T-cell (primary cell): ENCODE measurements at regions of chr4 and their contacts with region 1.

Region 1: DNA sequence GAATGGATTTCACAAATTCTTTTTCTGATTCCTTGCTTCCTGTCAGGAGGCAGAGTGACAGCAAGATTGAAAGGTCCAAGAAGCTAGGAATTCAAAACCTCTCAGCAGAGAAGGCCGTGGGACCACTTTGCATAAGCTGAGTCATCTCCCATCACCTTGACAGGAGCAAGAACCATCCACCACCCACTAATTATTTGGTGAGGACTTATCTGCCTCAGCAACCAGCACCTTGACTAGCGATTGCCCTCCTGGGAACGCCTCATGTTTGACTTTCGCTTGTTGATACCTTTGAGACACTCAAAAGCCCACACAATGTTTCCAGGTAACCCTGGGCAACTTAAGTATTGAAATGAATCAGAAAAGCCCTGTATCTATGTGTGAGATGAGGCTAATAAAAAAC is 233.5 kb upstream of the GYPA start:
- DNase-seq: no peak
- ATAC-seq: no peak
- H3K4me3 ChIP-seq: no peak overlapping the region
- H3K4me3 Mint-ChIP-seq: no peak overlapping the region
- H3K27ac ChIP-seq: no peak overlapping the region
- H3K27ac Mint-ChIP-seq: no peak overlapping the region
- H3K4me1 ChIP-seq: no peaks in the 10 kb centered on the region
- H3K4me1 Mint-ChIP-seq: no peaks in the 10 kb centered on the region
- H3K27me3 ChIP-seq: no peaks in the 10 kb centered on the region
- H3K27me3 Mint-ChIP-seq: no peaks in the 10 kb centered on the region

Region 2: DNA sequence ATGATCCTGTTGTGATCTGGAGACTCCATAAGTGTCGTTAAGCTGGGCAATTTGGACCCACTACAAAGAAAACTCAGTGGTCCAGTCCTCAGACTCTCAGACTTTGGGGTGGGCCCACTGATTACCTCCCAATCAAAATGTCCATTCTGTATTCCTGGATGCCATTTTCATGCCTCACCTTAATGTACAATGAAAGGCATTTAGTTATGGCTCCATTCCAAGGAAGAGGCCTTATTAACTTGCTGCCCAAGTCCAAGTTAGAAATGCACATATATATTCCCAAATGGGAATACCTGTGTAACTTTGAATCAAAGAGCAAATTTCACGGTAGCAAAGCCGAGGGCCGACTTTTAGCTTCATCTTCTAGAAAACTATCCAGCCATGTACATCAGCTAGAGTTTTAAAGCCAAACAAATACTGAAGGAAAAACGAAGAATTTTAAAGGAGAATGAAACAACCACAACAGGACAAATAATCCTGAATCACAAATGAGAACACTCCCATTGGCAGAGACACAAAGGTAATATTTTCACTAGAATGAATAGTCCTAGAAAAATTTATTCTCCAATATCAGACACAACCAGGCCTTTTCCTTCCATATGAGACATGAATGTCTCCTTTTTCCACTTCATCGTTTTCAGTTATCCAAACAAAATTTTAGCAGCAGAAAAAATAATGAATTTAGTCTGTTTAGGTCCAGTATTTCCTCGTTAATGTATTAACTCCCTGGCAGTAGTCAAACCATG is 208.2 kb after region 1 on chr4:
- CTCF ChIA-PET with region 1: no interaction called
- POLR2A ChIA-PET with region 1: interaction called in 1 of 2 experiments, 14 read pairs
- DNase-seq: no peak
- ATAC-seq: no peak
- H3K4me3 ChIP-seq: no peak overlapping the region
- H3K4me3 Mint-ChIP-seq: no peak overlapping the region
- H3K27ac ChIP-seq: no peak overlapping the region
- H3K27ac Mint-ChIP-seq: no peak overlapping the region
- H3K4me1 ChIP-seq: no peaks in the 10 kb centered on the region
- H3K4me1 Mint-ChIP-seq: no peaks in the 10 kb centered on the region
- H3K27me3 ChIP-seq: no peaks in the 10 kb centered on the region
- H3K27me3 Mint-ChIP-seq: peaks cover 0 to 4% of the 10 kb centered on the region in 2 donors